ENCODE measurements at regions of chr1 and their contacts with region 1.

Region 1: GRCh38 chr1:32013386-32014198 is at the start of gene KHDRBS1:
- DNase-seq: peak; percentile 92 to 100 (median 97)
- ATAC-seq: peak; percentile 85
- H3K4me3 ChIP-seq: peak within 1 kb of the TSS; percentile 82 to 98
- H3K4me3 Mint-ChIP-seq: peak within 1 kb of the TSS; percentile 96
- H3K27ac ChIP-seq: peak within 1 kb of the TSS; percentile 93
- H3K27ac Mint-ChIP-seq: peak within 1 kb of the TSS; percentile 99
- H3K4me1 ChIP-seq: peaks cover 28% of the 10 kb centered on the region
- H3K4me1 Mint-ChIP-seq: peaks cover 30% of the 10 kb centered on the region
- H3K27me3 ChIP-seq: no peaks in the 10 kb centered on the region
- H3K27me3 Mint-ChIP-seq: no peaks in the 10 kb centered on the region
- CTCF ChIP-seq: no peak
- total RNA-seq, gene KHDRBS1: 102 TPM

Region 2: DNA sequence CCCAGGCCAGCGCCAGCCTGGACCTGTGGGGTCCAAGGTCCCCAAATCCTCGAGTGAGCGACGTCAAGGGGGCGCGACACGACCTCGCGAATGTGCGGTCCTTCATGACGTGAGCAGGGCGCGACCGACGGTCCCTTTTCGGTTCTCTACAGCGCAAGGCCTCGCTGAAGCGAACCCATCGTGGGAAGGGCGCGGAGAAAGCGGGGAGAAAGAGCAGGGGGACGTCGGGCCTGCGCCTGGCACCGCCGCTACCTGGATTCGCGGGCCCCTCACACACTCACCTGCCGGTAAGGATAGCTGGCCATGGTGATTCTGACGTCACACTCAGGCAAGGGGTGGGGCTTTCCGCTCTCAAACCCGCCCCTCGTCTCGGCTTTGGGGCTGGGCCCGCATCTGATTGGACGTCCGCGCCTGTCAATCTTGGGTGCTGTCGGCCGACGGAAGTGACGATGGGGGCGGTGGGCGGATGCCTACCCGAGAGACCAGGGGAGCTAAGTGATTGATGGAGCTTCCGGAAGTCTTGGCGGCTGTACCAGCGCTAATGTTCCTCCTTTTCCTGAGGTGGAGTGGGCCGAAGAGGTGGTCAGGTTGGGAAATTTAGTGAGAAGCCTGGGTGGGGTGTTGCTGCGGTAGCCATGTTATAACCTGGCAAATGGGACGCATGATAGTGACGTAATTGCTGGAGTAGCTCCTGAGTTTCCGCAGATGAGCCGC is 368.9 kb before region 1 on chr1 and contains the start of gene PEF1:
- CTCF ChIA-PET with region 1: no interaction called
- POLR2A ChIA-PET with region 1: no interaction called
- intact Hi-C with region 1: loop called in 1 of 2 experiments (anchors 1 kb)
- DNase-seq: peak; percentile 99 to 100 (median 99)
- ATAC-seq: peak; percentile 91
- H3K4me3 ChIP-seq: peak within 1 kb of the TSS; percentile 92 to 97
- H3K4me3 Mint-ChIP-seq: peak within 1 kb of the TSS; percentile 100
- H3K27ac ChIP-seq: peak within 1 kb of the TSS; percentile 99
- H3K27ac Mint-ChIP-seq: peak within 1 kb of the TSS; percentile 100
- H3K4me1 ChIP-seq: peaks cover 30% of the 10 kb centered on the region
- H3K4me1 Mint-ChIP-seq: peaks cover 40% of the 10 kb centered on the region
- H3K27me3 ChIP-seq: no peaks in the 10 kb centered on the region
- H3K27me3 Mint-ChIP-seq: no peaks in the 10 kb centered on the region
- CTCF ChIP-seq: no peak
- total RNA-seq, gene PEF1: 35.8 to 36.6 TPM

Region 3: GRCh38 chr1:31944205-31945089 is 69.1 kb before region 1 on chr1:
- CTCF ChIA-PET with region 1: no interaction called
- POLR2A ChIA-PET with region 1: interaction called, 3 read pairs
- intact Hi-C with region 1: loop called (anchors 1 to 2 kb)
- DNase-seq: peak; percentile 49 to 92 (median 85)
- ATAC-seq: peak; percentile 61
- H3K4me3 ChIP-seq: peak overlapping the region; percentile 36 to 65
- H3K4me3 Mint-ChIP-seq: peak overlapping the region; percentile 92
- H3K27ac ChIP-seq: peak overlapping the region; percentile 41 to 78
- H3K27ac Mint-ChIP-seq: peak overlapping the region; percentile 97
- H3K4me1 ChIP-seq: peaks cover 47% of the 10 kb centered on the region
- H3K4me1 Mint-ChIP-seq: peaks cover 50% of the 10 kb centered on the region
- H3K27me3 ChIP-seq: no peaks in the 10 kb centered on the region
- H3K27me3 Mint-ChIP-seq: no peaks in the 10 kb centered on the region
- CTCF ChIP-seq: no peak

Region 4: GRCh38 chr1:32035119-32035518 is 21.5 kb after region 1 on chr1:
- CTCF ChIA-PET with region 1: no interaction called
- POLR2A ChIA-PET with region 1: interaction called, 3 read pairs
- intact Hi-C with region 1: loop called in 1 of 2 experiments (anchors 2 kb)
- DNase-seq: peak in 4 of 9 experiments; percentile 24 to 62 (median 42)
- ATAC-seq: peak; percentile 96
- H3K4me3 ChIP-seq: no peak overlapping the region
- H3K4me3 Mint-ChIP-seq: no peak overlapping the region
- H3K27ac ChIP-seq: peak overlapping the region in 1 of 2 experiments; percentile 29
- H3K27ac Mint-ChIP-seq: peak overlapping the region; percentile 74
- H3K4me1 ChIP-seq: peaks cover 5% of the 10 kb centered on the region
- H3K4me1 Mint-ChIP-seq: peaks cover 33% of the 10 kb centered on the region
- H3K27me3 ChIP-seq: no peaks in the 10 kb centered on the region
- H3K27me3 Mint-ChIP-seq: no peaks in the 10 kb centered on the region
- CTCF ChIP-seq: no peak

Region 5: GRCh38 chr1:32179443-32180185 is 166.0 kb after region 1 on chr1 and contains the start of gene TXLNA:
- CTCF ChIA-PET with region 1: no interaction called
- POLR2A ChIA-PET with region 1: interaction called, 3 read pairs
- intact Hi-C with region 1: loop called in 1 of 2 experiments (anchors 1 kb)
- DNase-seq: peak; percentile 66 to 93 (median 88)
- ATAC-seq: peak; percentile 88
- H3K4me3 ChIP-seq: peak within 1 kb of the TSS; percentile 67 to 85
- H3K4me3 Mint-ChIP-seq: peak within 1 kb of the TSS; percentile 84
- H3K27ac ChIP-seq: peak within 1 kb of the TSS; percentile 70 to 89
- H3K27ac Mint-ChIP-seq: peak within 1 kb of the TSS; percentile 93
- H3K4me1 ChIP-seq: peaks cover 26% of the 10 kb centered on the region
- H3K4me1 Mint-ChIP-seq: peaks cover 44% of the 10 kb centered on the region
- H3K27me3 ChIP-seq: no peaks in the 10 kb centered on the region
- H3K27me3 Mint-ChIP-seq: no peaks in the 10 kb centered on the region
- CTCF ChIP-seq: no peak
- total RNA-seq, gene TXLNA: 7.5 to 8.9 TPM

Region 6: DNA sequence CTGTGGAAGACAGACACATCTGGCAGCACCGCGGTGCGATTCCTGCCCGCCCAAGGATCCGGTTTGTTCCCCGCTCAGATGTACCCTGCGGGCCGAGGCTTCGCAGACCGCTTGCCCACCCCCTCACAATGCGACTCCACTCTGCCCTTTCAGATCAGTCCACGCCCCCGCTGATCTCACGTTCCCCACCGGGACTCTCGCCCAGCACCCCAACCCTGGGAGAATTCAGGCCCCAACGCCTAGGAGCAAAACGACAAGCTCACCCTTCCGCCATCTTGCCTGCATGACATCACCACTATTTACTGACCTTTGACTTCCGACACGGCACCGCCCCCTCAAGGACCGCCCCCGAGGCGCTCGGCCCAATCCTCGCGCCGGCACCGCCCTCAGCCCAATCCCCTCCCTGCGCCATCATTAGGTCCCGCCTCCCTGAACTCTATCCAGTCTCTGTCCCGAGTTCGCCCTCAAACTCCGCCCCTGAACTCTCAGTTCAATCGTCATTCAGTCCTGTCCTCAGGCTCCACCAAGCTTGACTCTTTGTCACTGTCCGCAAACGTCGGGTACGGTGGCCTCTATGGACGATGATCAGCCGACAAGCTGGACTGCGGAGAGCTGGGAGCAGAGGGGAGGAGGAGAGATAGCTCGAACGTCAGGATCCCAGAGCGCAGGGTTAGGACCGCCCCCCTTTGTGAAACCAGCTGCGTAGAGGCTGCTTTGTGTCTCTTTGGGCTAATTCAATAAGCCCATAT is 380.7 kb after region 1 on chr1 and contains the start of gene BSDC1:
- CTCF ChIA-PET with region 1: no interaction called
- POLR2A ChIA-PET with region 1: no interaction called
- intact Hi-C with region 1: loop called in 1 of 2 experiments (anchors 10 kb)
- DNase-seq: peak; percentile 97 to 99 (median 98)
- ATAC-seq: peak; percentile 98
- H3K4me3 ChIP-seq: peak within 1 kb of the TSS; percentile 75 to 92
- H3K4me3 Mint-ChIP-seq: peak within 1 kb of the TSS; percentile 99
- H3K27ac ChIP-seq: peak within 1 kb of the TSS; percentile 86 to 98
- H3K27ac Mint-ChIP-seq: peak within 1 kb of the TSS; percentile 100
- H3K4me1 ChIP-seq: peaks cover 11% of the 10 kb centered on the region
- H3K4me1 Mint-ChIP-seq: peaks cover 31% of the 10 kb centered on the region
- H3K27me3 ChIP-seq: no peaks in the 10 kb centered on the region
- H3K27me3 Mint-ChIP-seq: no peaks in the 10 kb centered on the region
- CTCF ChIP-seq: no peak
- total RNA-seq, gene BSDC1: 189 to 201 TPM

Measured in CD8-positive, alpha-beta T cell (primary cell).